ENCODE measurements at regions of chr20 and their contacts with region 1.

Region 1: DNA sequence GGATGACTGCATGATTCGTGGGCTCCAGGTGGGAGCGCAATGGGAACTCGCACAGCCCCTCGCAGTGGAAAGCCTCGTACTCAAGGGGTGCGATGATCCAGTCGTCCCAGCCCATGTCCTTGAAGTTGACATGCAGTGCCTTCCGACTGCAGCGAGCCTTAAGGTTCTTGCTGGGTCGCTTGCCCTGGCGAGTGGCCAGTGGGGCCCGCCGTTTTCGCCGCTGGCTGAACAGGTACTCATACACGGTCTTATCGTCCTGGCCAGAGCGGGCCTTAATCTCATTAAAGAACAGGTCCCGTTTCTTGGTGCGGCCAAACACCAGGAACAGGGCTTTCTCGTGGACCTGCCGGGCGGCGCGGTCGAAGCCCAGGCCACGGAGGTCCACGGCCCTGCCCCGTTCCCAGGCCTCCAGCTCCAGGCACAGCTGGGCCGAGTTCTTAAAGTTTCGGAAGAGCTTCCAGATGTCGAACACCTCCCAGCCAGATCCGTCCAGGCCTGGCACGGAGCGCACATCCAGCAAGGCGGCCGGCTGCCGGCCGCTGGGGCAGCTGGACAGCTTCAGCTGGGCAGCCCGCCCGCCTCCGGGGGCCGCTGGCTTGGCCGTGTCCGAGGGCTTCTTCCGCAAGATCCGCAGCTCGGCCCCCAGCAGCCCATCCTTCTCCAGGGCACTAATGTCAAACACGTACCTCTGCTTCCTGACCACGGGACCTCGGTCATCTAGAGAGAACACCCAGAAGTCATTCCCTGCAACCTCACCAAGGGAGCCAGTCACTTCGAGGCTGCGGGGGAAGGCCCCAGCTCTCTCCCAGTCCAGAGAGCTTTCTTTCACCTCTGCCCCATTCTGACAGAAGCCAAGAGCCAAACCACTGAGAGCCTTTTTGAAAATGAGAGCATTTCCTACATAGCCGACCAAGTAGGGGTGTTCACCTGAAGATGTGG is 3.7 kb downstream of the GDF5 start:
- DNase-seq: peak in 1 of 2 donors; percentile 46
- H3K4me3 ChIP-seq: no peak overlapping the region
- H3K27ac ChIP-seq: no peak overlapping the region
- H3K4me1 ChIP-seq: peaks cover 13 to 24% (median 17%) of the 10 kb centered on the region in 4 donors
- H3K27me3 ChIP-seq: no peaks in the 10 kb centered on the region
- CTCF ChIP-seq: no peak
- EP300 ChIP-seq: no peak
- POLR2A ChIP-seq: no peak

Region 2: GRCh38 chr20:35303735-35304491 is 130.4 kb before region 1 on chr20:
- intact Hi-C with region 1: loop called (anchors 5 kb)
- DNase-seq: peak; percentile 89 to 94
- H3K4me3 ChIP-seq: no peak overlapping the region
- H3K27ac ChIP-seq: peak overlapping the region in 1 of 5 donors; percentile 82
- H3K4me1 ChIP-seq: peaks cover 37 to 70% (median 56%) of the 10 kb centered on the region in 4 donors
- H3K27me3 ChIP-seq: no peaks in the 10 kb centered on the region
- CTCF ChIP-seq: peak in 5 of 7 experiments; percentile 84 to 91 (median 88)
- EP300 ChIP-seq: no peak
- POLR2A ChIP-seq: no peak